Heart left ventricle (tissue), 16 donors: ENCODE measurements at regions of chr5 and their contacts with region 1.

Region 1: GRCh38 chr5:121870489-121870888 is 18.8 kb downstream of the FTMT start:
- DNase-seq: no peak
- ATAC-seq: no peak
- H3K4me3 ChIP-seq: no peak overlapping the region
- H3K27ac ChIP-seq: no peak overlapping the region
- H3K4me1 ChIP-seq: no peaks in the 10 kb centered on the region
- H3K27me3 ChIP-seq: no peaks in the 10 kb centered on the region
- CTCF ChIP-seq: peak in 8 of 12 donors; percentile 8 to 44 (median 23)
- POLR2A ChIP-seq: no peak

Region 2: DNA sequence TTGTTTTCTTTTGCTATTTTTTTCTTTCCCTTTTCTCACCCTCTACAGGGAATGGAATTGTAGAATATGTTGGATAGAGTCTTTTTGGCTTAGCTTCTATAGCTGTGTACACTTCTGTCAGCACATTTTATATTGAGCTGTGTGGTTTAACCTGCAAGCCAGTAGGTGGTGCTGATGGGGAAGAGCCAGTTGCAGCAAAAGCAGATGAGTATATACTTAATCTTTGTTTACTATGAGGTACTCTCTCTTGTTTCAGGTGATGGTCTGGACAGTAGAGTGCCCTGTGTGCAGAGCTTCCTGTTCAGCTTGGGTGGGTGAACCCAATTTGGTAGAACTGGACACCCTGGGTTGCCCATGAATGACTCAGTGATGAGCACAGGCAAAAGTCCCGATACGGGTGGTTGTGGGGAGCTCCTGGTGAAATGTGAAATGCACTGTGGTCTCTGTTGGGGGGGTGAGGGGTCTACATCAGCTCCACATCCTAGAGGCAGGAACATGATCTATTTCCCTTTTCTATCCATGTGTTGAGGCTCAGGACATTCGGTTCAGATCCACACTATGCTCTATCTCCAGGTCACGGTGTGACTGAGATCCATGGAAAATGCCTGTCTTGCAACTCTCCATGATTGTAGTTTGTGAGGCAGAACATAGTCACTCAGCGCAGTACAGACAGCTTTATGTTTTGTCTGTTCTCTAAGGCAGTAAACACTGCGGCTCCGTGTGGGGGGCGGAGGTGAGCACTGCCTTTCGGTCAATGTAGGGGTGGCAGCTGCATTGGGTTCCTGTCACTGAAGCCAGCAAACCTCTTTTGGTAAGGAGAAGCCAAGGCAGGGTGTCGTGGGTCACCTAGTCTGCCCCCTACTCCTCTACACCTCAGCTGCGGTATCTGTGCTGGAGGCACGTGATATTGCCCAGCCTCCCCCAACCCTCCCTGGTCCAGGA is 1053.2 kb before region 1 on chr5:
- intact Hi-C with region 1: loop called in 3 of 10 experiments (anchors 10 kb)
- DNase-seq: no peak
- ATAC-seq: peak in 2 of 4 donors; percentile 46 to 51
- H3K4me3 ChIP-seq: no peak overlapping the region
- H3K27ac ChIP-seq: no peak overlapping the region
- H3K4me1 ChIP-seq: no peaks in the 10 kb centered on the region
- H3K27me3 ChIP-seq: no peaks in the 10 kb centered on the region
- CTCF ChIP-seq: peak in 7 of 12 donors; percentile 11 to 47 (median 25)
- POLR2A ChIP-seq: no peak

Region 3: DNA sequence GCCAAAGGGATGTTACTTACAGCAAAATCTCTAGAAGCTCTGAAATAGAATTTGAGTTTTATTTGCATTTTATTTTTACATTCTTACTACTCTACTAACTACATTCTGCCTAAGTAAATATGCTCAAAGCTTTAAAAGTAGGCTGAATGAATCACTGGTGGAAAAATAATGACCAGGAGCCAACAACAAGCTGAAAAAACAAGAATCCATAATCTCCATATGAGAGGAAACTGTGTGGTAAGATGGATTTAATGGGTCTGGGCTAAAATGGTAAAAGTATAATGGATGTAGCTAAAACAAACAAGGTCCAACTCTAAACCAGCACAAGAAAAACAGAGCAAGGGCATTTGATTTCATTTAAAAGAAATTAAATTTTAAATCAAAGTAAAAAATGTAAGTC is 544.6 kb before region 1 on chr5:
- intact Hi-C with region 1: no loop called
- DNase-seq: no peak
- ATAC-seq: no peak
- H3K4me3 ChIP-seq: no peak overlapping the region
- H3K27ac ChIP-seq: no peak overlapping the region
- H3K4me1 ChIP-seq: no peaks in the 10 kb centered on the region
- H3K27me3 ChIP-seq: no peaks in the 10 kb centered on the region
- CTCF ChIP-seq: no peak
- POLR2A ChIP-seq: no peak

Region 4: DNA sequence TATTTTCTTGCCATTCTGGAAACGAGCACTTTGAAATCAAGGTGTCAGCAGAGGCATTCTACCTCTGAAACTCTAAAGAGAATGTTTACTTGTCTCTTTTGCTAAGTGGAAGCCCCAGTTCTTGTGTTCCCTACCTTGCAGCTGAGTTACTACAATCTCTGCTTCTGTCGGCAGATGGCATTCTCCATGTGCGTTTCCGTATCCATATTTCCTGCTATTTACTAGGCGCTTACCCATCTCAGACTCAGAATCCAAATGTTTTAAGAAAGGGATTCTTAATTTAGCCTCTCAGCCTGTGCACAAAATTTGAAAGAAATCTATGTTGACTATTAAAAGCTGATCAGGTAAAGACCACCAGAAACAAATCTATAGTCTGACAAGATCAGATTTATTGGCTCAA is 240.1 kb before region 1 on chr5:
- intact Hi-C with region 1: loop called in 3 of 10 experiments (anchors 2 to 10 kb)
- DNase-seq: no peak
- ATAC-seq: no peak
- H3K4me3 ChIP-seq: no peak overlapping the region
- H3K27ac ChIP-seq: no peak overlapping the region
- H3K4me1 ChIP-seq: no peaks in the 10 kb centered on the region
- H3K27me3 ChIP-seq: peaks cover 0 to 5% (median 0%) of the 10 kb centered on the region in 9 donors
- CTCF ChIP-seq: peak in 3 of 12 donors; percentile 10 to 31 (median 25)
- POLR2A ChIP-seq: no peak

Region 5: DNA sequence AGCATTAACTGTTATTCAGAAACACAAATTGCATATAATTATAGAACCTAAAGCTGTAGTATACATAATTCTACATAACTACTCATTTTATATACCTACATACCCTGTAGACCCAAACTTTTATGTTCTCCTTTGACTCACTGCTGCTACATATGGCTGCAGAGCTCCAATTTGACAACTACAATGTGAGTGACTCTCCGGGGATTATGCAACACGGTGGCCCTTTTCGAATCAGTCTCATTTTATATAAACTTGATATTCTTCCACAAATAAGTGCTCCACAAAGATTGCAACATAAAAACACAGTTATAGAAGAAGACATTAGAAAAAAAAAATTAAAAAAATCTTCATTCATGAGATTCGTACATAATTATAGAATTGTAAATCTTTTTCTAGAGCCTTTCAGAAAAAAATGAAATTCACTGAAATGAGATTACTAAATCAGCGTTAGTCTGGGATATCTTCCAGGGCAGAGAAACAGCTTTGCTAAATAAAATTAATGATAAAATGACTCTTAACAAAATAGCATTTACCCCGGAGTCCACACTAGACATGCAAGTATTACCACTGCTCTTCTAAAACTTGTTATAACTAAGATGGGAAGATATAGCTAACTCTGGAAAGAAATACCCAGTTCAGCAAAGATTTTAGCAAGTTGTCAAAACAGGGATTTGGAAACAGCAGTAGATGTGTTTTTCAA is 143.9 kb after region 1 on chr5:
- intact Hi-C with region 1: no loop called
- DNase-seq: no peak
- ATAC-seq: no peak
- H3K4me3 ChIP-seq: no peak overlapping the region
- H3K27ac ChIP-seq: no peak overlapping the region
- H3K4me1 ChIP-seq: peaks cover 0 to 5% (median 0%) of the 10 kb centered on the region in 12 donors
- H3K27me3 ChIP-seq: no peaks in the 10 kb centered on the region
- CTCF ChIP-seq: no peak
- POLR2A ChIP-seq: no peak